ENCODE measurements at regions of chr18 and their contacts with region 1.

Region 1: DNA sequence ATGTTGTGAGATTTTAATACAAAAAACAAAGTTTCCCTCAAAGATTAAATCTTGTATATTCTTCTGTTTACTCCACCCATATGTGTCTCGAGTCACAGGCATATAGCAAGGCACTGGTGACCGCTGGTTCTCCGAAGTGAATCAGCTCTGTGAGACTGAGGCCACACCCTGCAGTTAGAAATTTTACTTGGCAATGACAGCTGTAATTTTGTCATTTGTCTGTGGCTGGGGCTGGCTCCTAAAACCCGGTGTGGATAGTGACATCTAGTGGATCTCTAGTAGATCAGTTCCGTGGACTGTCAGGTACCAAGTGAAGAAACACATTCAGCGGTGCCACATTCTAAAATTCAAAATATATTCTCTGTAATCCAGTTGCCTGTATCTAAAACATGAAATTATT is 278.0 kb downstream of the NEDD4L start:
- DNase-seq: peak; percentile 86
- H3K4me3 ChIP-seq: no peak overlapping the region
- H3K27ac ChIP-seq: peak overlapping the region; percentile 83
- H3K4me1 ChIP-seq: peaks cover 14% of the 10 kb centered on the region
- H3K27me3 ChIP-seq: no peaks in the 10 kb centered on the region
- CTCF ChIP-seq: peak; percentile 65 to 68

Region 2: DNA sequence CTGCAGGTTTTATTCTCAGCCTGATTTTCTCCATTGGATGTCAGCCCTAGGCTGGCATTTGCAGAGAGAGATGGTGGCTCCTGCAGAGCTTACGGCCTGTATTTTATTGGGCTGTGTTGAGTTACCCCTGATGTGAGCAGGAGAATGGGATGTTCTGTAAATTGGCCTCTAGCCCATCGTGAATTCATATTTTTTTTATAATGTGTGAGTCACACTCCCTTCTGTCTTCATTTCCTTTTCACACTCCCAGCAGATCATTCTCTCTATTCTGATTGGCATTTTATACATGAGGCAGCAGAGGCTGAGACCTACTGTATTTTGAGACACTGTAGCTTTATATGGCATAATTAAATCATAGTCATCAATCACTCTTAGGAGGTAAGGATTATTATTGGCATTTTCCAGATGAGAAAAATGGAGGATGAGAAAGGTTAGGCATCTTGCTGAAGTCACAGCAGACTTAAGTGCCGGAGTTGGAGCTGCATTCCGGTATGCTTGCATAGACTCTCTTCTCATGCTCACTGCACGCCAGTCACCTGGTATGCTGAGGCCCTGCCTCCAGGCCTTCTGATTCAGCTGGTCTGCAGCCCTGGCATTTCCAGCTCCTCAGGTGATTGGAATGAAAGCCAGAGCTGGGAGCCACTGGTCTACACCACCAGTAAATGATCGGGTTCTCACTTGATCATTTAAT is 135.6 kb before region 1 on chr18:
- CTCF ChIA-PET with region 1: no interaction called
- dilution Hi-C with region 1: no loop called
- in situ Hi-C with region 1: no loop called
- intact Hi-C with region 1: loop called (anchors 2 kb)
- DNase-seq: peak; percentile 92
- H3K4me3 ChIP-seq: no peak overlapping the region
- H3K27ac ChIP-seq: peak overlapping the region; percentile 79
- H3K4me1 ChIP-seq: peaks cover 36% of the 10 kb centered on the region
- H3K27me3 ChIP-seq: no peaks in the 10 kb centered on the region
- CTCF ChIP-seq: no peak

Region 3: DNA sequence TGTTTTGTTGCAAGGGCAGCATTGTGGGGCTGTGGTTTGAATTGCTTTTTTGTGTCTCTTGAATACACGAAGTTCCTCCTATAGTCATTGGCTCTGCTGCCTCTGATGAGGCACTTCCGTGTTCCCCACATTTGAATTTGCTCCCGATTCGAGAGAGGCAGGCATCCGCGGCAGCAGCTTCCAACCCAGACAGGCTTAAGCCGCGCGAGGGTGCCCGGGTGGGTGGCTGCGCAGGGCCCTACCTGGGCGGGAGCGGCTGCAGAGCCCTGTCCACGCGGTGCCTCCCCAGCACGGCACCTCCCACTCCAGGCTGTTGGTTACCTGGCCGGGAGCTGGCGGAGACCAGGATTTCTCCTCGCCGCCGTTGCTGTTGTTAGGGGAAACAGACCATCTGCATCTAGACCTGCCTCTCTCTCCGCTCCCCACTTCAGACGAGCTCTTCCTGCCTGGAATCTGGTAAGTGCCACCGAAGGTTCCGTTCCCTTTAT is 126.7 kb before region 1 on chr18:
- CTCF ChIA-PET with region 1: no interaction called
- dilution Hi-C with region 1: no loop called
- in situ Hi-C with region 1: no loop called
- intact Hi-C with region 1: loop called (anchors 1 kb)
- DNase-seq: peak; percentile 73
- H3K4me3 ChIP-seq: peak overlapping the region; percentile 62 to 98 (median 86)
- H3K27ac ChIP-seq: peak overlapping the region; percentile 93
- H3K4me1 ChIP-seq: peaks cover 34% of the 10 kb centered on the region
- H3K27me3 ChIP-seq: no peaks in the 10 kb centered on the region
- CTCF ChIP-seq: no peak

Region 4: GRCh38 chr18:58344861-58345463 is 23.0 kb after region 1 on chr18:
- CTCF ChIA-PET with region 1: no interaction called
- dilution Hi-C with region 1: no loop called
- in situ Hi-C with region 1: no loop called
- intact Hi-C with region 1: no loop called
- DNase-seq: no peak
- H3K4me3 ChIP-seq: no peak overlapping the region
- H3K27ac ChIP-seq: no peak overlapping the region
- H3K4me1 ChIP-seq: no peaks in the 10 kb centered on the region
- H3K27me3 ChIP-seq: no peaks in the 10 kb centered on the region
- CTCF ChIP-seq: no peak